Activated CD4-positive, alpha-beta T cell treated with anti-CD3 and anti-CD28 coated beads for 36 hours (primary cell): ENCODE measurements at regions of chr11 and their contacts with region 1.

Region 1: DNA sequence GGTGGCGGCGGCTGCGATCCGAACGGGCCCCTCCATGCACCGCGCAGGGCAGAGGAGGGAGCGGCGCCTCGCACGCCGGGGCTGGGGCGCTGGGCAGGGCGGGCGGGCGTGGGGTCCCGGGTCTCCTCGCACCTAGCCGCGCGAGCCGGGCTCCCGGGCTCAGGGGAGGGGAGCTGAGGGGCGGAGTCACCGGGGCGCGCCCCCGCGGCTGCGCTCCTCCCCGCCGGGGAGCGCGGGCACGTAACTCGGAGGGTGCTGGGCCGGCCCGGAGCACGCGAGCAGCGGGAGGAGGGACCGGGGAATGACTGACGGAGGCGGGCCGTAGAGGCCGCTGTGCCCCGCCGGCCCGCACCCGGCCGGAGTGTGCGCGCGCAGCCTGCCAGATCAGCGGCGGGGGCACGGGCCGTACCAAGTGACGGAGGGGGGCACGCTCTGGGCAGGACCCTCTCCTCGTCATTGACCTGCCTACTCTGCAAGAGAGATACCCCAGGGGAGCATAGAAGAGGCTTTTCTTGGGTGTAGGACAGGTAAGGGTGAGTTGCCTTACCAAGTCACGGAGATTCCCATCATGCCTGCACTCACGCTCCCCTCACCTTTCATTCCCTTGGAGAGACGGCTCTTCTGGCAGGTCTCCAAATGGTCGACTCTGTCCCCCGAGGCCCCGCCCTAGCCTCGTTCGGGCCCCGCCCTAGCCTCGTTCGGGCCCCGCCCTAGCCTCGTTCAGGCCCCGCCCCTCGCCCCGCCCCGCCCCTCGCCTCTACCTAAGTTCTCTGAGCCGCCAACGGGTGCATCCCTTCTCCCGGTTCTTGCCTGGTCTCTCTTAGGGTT is at the start of gene CDON:
- DNase-seq: peak; percentile 95
- ATAC-seq: peak; percentile 97
- H3K4me3 Mint-ChIP-seq: peak within 1 kb of the TSS; percentile 74
- H3K27ac Mint-ChIP-seq: peak within 1 kb of the TSS; percentile 94
- H3K4me1 Mint-ChIP-seq: peaks cover 5% of the 10 kb centered on the region
- H3K27me3 Mint-ChIP-seq: peaks cover 12% of the 10 kb centered on the region
- total RNA-seq, gene CDON: 1.8 to 3.2 TPM

Region 2: GRCh38 chr11:124953753-124954589 is 1108.9 kb before region 1 on chr11 and contains the start of gene CCDC15:
- CTCF ChIA-PET with region 1: no interaction called
- POLR2A ChIA-PET with region 1: no interaction called
- intact Hi-C with region 1: loop called in 1 of 2 experiments (anchors 2 kb)
- DNase-seq: peak; percentile 97
- ATAC-seq: peak; percentile 98
- H3K4me3 Mint-ChIP-seq: no peak within 1 kb of the TSS
- H3K27ac Mint-ChIP-seq: no peak within 1 kb of the TSS
- H3K4me1 Mint-ChIP-seq: peaks cover 4% of the 10 kb centered on the region
- H3K27me3 Mint-ChIP-seq: no peaks in the 10 kb centered on the region
- total RNA-seq, gene CCDC15: 5.6 to 6.7 TPM

Region 3: GRCh38 chr11:125568970-125569914 is 493.7 kb before region 1 on chr11 and contains the start of gene EI24:
- CTCF ChIA-PET with region 1: no interaction called
- POLR2A ChIA-PET with region 1: no interaction called
- intact Hi-C with region 1: loop called in 1 of 2 experiments (anchors 1 kb)
- DNase-seq: peak; percentile 95
- ATAC-seq: peak; percentile 95
- H3K4me3 Mint-ChIP-seq: peak within 1 kb of the TSS; percentile 92
- H3K27ac Mint-ChIP-seq: peak within 1 kb of the TSS; percentile 93
- H3K4me1 Mint-ChIP-seq: peaks cover 24% of the 10 kb centered on the region
- H3K27me3 Mint-ChIP-seq: no peaks in the 10 kb centered on the region
- total RNA-seq, gene EI24: 36.3 to 36.6 TPM

Region 4: GRCh38 chr11:125887373-125888324 is 175.2 kb before region 1 on chr11 and contains the start of gene HYLS1:
- CTCF ChIA-PET with region 1: no interaction called
- POLR2A ChIA-PET with region 1: no interaction called
- intact Hi-C with region 1: loop called (anchors 1 kb)
- DNase-seq: peak; percentile 97
- ATAC-seq: peak; percentile 90
- H3K4me3 Mint-ChIP-seq: peak within 1 kb of the TSS; percentile 78
- H3K27ac Mint-ChIP-seq: peak within 1 kb of the TSS; percentile 87
- H3K4me1 Mint-ChIP-seq: peaks cover 41% of the 10 kb centered on the region
- H3K27me3 Mint-ChIP-seq: no peaks in the 10 kb centered on the region
- total RNA-seq, gene HYLS1: 7.2 to 9.3 TPM

Region 5: DNA sequence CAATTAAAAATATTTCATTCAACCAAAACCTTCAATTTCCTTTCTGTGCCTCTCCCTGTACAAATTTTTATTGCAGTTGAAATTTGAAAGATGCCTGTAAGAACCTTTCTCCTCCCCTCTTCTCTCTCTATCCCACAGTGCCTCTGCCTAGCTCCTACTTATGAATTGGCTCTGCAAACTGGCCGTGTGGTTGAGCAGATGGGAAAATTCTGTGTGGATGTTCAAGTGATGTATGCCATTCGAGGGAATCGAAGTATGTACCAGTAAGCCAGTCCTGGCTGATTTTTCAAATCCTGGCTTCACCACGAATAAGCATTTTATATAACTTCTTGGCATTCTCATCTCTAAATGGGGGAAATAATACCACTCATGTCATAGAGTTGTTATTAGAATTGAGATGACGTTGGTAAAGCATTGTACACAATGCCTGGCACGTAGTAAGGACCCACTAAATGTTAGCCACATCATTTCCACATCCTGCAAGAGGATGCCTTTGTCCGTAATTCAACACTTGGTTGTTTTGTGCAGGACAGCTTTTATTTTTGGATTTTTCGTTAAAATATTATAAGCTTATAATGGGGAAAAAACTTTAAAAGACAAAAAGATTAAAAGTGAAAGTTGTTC is 152.6 kb before region 1 on chr11:
- CTCF ChIA-PET with region 1: no interaction called
- POLR2A ChIA-PET with region 1: no interaction called
- intact Hi-C with region 1: no loop called
- DNase-seq: no peak
- ATAC-seq: no peak
- H3K4me3 Mint-ChIP-seq: no peak overlapping the region
- H3K27ac Mint-ChIP-seq: no peak overlapping the region
- H3K4me1 Mint-ChIP-seq: no peaks in the 10 kb centered on the region
- H3K27me3 Mint-ChIP-seq: peaks cover 29% of the 10 kb centered on the region

Region 6: GRCh38 chr11:126211235-126212088 is 148.6 kb after region 1 on chr11 and contains the starts of genes FAM118B and RPUSD4:
- CTCF ChIA-PET with region 1: no interaction called
- POLR2A ChIA-PET with region 1: no interaction called
- intact Hi-C with region 1: loop called (anchors 1 kb)
- DNase-seq: peak; percentile 99
- ATAC-seq: peak; percentile 94
- H3K4me3 Mint-ChIP-seq: peak within 1 kb of the TSS; percentile 98
- H3K27ac Mint-ChIP-seq: peak within 1 kb of the TSS; percentile 93
- H3K4me1 Mint-ChIP-seq: peaks cover 39% of the 10 kb centered on the region
- H3K27me3 Mint-ChIP-seq: no peaks in the 10 kb centered on the region
- total RNA-seq, gene FAM118B: 8.9 to 9.0 TPM
- total RNA-seq, gene RPUSD4: 31.0 to 33.9 TPM

Region 7: GRCh38 chr11:126303623-126304456 is 240.9 kb after region 1 on chr11 and contains the start of gene DCPS:
- CTCF ChIA-PET with region 1: no interaction called
- POLR2A ChIA-PET with region 1: no interaction called
- intact Hi-C with region 1: loop called in 1 of 2 experiments (anchors 1 kb)
- DNase-seq: peak; percentile 92
- ATAC-seq: peak; percentile 93
- H3K4me3 Mint-ChIP-seq: peak within 1 kb of the TSS; percentile 85
- H3K27ac Mint-ChIP-seq: peak within 1 kb of the TSS; percentile 98
- H3K4me1 Mint-ChIP-seq: peaks cover 32% of the 10 kb centered on the region
- H3K27me3 Mint-ChIP-seq: no peaks in the 10 kb centered on the region
- total RNA-seq, gene DCPS: 29.7 to 39.3 TPM

Region 8: GRCh38 chr11:126363706-126364248 is 300.9 kb after region 1 on chr11:
- CTCF ChIA-PET with region 1: no interaction called
- POLR2A ChIA-PET with region 1: no interaction called
- intact Hi-C with region 1: no loop called
- DNase-seq: no peak
- ATAC-seq: no peak
- H3K4me3 Mint-ChIP-seq: no peak overlapping the region
- H3K27ac Mint-ChIP-seq: no peak overlapping the region
- H3K4me1 Mint-ChIP-seq: no peaks in the 10 kb centered on the region
- H3K27me3 Mint-ChIP-seq: no peaks in the 10 kb centered on the region

Region 9: GRCh38 chr11:126834149-126834548 is 771.3 kb after region 1 on chr11:
- CTCF ChIA-PET with region 1: no interaction called
- POLR2A ChIA-PET with region 1: no interaction called
- intact Hi-C with region 1: no loop called
- DNase-seq: no peak
- ATAC-seq: no peak
- H3K4me3 Mint-ChIP-seq: no peak overlapping the region
- H3K27ac Mint-ChIP-seq: no peak overlapping the region
- H3K4me1 Mint-ChIP-seq: no peaks in the 10 kb centered on the region
- H3K27me3 Mint-ChIP-seq: peaks cover 3% of the 10 kb centered on the region